CD8-positive, alpha-beta T cell (primary cell): ENCODE measurements at regions of chr7 and their contacts with region 1.

Region 1: GRCh38 chr7:100101016-100101862 is at the starts of genes AP4M1 and MCM7:
- DNase-seq: peak; percentile 88 to 98 (median 96)
- ATAC-seq: peak; percentile 83
- H3K4me3 ChIP-seq: peak within 1 kb of the TSS; percentile 91 to 98
- H3K4me3 Mint-ChIP-seq: peak within 1 kb of the TSS; percentile 95
- H3K27ac ChIP-seq: peak within 1 kb of the TSS; percentile 80 to 89
- H3K27ac Mint-ChIP-seq: peak within 1 kb of the TSS; percentile 97
- H3K4me1 ChIP-seq: peaks cover 27% of the 10 kb centered on the region
- H3K4me1 Mint-ChIP-seq: peaks cover 41% of the 10 kb centered on the region
- H3K27me3 ChIP-seq: no peaks in the 10 kb centered on the region
- H3K27me3 Mint-ChIP-seq: no peaks in the 10 kb centered on the region
- CTCF ChIP-seq: no peak
- total RNA-seq, gene AP4M1: 2.8 to 3.9 TPM
- total RNA-seq, gene MCM7: 63.7 to 64.6 TPM

Region 2: DNA sequence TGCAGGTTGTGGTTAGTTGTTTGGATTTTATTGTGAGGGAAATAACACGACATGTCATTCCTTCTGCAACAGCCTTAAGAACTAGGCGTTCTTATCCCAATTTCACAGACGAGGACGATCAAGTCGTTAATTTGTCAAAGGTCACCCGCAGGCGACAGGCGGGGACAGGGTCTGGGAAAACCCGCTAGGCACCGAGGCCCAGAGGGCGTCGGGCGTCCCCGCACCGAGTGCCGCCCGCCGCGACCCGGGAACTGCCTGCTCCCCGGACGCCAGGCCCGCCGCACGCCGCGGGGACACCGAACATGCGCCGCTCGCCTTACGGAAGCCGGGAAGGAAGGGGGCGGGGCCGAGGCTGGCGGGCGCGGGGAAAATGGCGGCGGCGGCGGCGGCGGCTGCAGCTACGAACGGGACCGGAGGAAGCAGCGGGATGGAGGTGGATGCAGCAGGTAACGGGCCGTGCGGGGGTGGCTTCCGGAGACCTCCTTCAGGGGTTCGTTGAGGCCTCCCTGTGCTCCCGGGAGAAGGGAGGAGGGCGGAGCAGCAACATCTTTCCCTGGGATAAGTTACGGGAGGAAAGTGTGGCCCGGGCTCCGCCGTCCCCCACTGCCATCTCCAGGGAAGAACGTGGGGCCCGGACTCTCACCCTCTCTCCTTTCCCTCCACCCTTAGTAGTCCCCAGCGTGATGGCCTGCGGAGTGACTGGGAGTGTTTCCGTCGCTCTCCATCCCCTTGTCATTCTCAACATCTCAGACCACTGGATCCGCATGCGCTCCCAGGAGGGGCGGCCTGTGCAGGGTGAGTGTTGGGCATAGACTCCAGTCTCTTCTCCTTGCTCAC is 12.4 kb before region 1 on chr7 and contains the start of gene COPS6:
- CTCF ChIA-PET with region 1: interaction called, 17 read pairs
- POLR2A ChIA-PET with region 1: interaction called, 22 read pairs
- intact Hi-C with region 1: loop called (anchors 1 kb)
- DNase-seq: peak; percentile 72 to 93 (median 88)
- ATAC-seq: peak; percentile 89
- H3K4me3 ChIP-seq: peak within 1 kb of the TSS; percentile 89 to 95
- H3K4me3 Mint-ChIP-seq: peak within 1 kb of the TSS; percentile 88
- H3K27ac ChIP-seq: peak within 1 kb of the TSS; percentile 81
- H3K27ac Mint-ChIP-seq: peak within 1 kb of the TSS; percentile 95
- H3K4me1 ChIP-seq: peaks cover 18% of the 10 kb centered on the region
- H3K4me1 Mint-ChIP-seq: peaks cover 27% of the 10 kb centered on the region
- H3K27me3 ChIP-seq: no peaks in the 10 kb centered on the region
- H3K27me3 Mint-ChIP-seq: no peaks in the 10 kb centered on the region
- CTCF ChIP-seq: no peak
- total RNA-seq, gene COPS6: 73.2 to 77.8 TPM

Region 3: GRCh38 chr7:100119062-100119700 is 17.9 kb after region 1 on chr7 and contains the starts of genes CNPY4 and TAF6:
- CTCF ChIA-PET with region 1: interaction called, 9 read pairs
- POLR2A ChIA-PET with region 1: interaction called, 50 read pairs
- intact Hi-C with region 1: loop called (anchors 1 kb)
- DNase-seq: peak; percentile 86 to 97 (median 96)
- ATAC-seq: peak; percentile 69
- H3K4me3 ChIP-seq: peak within 1 kb of the TSS; percentile 80 to 93
- H3K4me3 Mint-ChIP-seq: peak within 1 kb of the TSS; percentile 99
- H3K27ac ChIP-seq: peak within 1 kb of the TSS; percentile 88 to 93
- H3K27ac Mint-ChIP-seq: peak within 1 kb of the TSS; percentile 93
- H3K4me1 ChIP-seq: peaks cover 17% of the 10 kb centered on the region
- H3K4me1 Mint-ChIP-seq: peaks cover 28% of the 10 kb centered on the region
- H3K27me3 ChIP-seq: no peaks in the 10 kb centered on the region
- H3K27me3 Mint-ChIP-seq: no peaks in the 10 kb centered on the region
- CTCF ChIP-seq: no peak
- total RNA-seq, gene CNPY4: 21.4 to 24.4 TPM
- total RNA-seq, gene TAF6: 24.9 to 31.6 TPM

Region 4: DNA sequence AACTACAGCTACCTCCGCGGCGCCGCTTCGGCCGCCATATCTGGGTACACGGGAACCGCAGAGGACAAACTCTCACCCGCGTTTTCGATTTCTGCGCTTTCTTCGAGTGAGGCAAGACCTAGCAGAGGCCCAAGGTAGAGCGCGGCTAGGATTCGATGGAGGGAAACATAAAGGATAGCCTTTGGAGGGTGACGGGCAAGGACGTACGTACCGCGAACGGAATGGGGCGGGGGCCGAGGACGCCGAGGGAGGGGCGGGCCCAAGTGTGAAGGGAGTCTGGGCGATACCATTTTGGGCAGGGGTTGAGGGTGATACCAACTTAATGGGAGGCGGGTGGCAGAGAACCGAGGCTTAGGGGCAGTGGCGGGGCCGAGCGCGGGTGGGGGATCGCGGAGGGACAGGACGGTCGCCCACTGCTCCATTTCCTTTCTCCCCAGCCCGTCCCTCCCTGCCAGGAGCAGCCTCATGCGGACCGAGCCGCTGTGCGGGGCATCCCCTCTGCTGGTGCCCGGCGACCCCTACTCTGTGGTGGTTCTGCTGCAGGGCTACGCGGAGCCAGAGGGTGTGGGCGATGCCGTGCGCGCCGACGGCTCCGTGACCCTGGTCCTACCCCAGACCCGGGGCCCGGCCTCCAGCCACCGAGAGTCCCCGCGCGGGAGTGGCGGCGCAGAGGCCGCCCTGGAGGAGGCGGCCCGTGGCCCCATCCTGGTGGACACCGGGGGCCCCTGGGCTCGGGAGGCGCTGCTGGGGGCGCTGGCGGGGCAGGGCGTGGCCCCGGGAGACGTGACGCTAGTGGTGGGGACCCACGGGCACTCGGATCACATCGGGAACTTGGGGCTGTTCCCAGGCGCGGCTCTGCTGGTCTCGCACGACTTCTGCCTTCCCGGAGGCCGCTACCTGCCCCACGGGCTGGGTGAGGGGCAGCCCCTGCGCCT is 26.0 kb after region 1 on chr7 and contains the start of gene MBLAC1:
- CTCF ChIA-PET with region 1: interaction called, 18 read pairs
- POLR2A ChIA-PET with region 1: interaction called, 50 read pairs
- intact Hi-C with region 1: loop called (anchors 1 kb)
- DNase-seq: peak; percentile 83 to 97 (median 93)
- ATAC-seq: peak; percentile 83
- H3K4me3 ChIP-seq: peak within 1 kb of the TSS; percentile 81 to 99
- H3K4me3 Mint-ChIP-seq: peak within 1 kb of the TSS; percentile 100
- H3K27ac ChIP-seq: peak within 1 kb of the TSS; percentile 92 to 98
- H3K27ac Mint-ChIP-seq: peak within 1 kb of the TSS; percentile 100
- H3K4me1 ChIP-seq: peaks cover 24% of the 10 kb centered on the region
- H3K4me1 Mint-ChIP-seq: peaks cover 39% of the 10 kb centered on the region
- H3K27me3 ChIP-seq: no peaks in the 10 kb centered on the region
- H3K27me3 Mint-ChIP-seq: no peaks in the 10 kb centered on the region
- CTCF ChIP-seq: no peak
- total RNA-seq, gene MBLAC1: 4.2 to 4.6 TPM

Region 5: DNA sequence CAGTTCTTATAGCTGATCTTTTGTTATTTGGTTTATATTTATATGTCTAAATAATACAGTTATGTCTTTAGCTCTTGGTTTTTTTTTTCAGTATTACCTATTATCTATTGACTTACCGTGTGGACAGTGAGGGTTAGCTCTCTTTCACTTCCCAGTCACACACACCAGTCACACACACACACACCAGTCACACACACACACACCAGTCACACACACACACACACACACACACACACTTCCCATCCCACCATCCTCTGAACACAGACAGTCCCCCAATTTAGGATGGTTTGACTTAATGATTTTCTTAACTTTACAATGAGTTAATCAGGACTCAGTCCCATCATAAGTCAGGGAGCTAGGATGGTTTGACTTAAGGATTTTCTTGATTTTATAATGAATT is 418.9 kb after region 1 on chr7:
- CTCF ChIA-PET with region 1: no interaction called
- POLR2A ChIA-PET with region 1: no interaction called
- intact Hi-C with region 1: no loop called
- DNase-seq: no peak
- ATAC-seq: no peak
- H3K4me3 ChIP-seq: no peak overlapping the region
- H3K4me3 Mint-ChIP-seq: no peak overlapping the region
- H3K27ac ChIP-seq: no peak overlapping the region
- H3K27ac Mint-ChIP-seq: no peak overlapping the region
- H3K4me1 ChIP-seq: peaks cover 26% of the 10 kb centered on the region
- H3K4me1 Mint-ChIP-seq: peaks cover 34% of the 10 kb centered on the region
- H3K27me3 ChIP-seq: no peaks in the 10 kb centered on the region
- H3K27me3 Mint-ChIP-seq: no peaks in the 10 kb centered on the region
- CTCF ChIP-seq: no peak